Activated CD4-positive, alpha-beta memory T cell treated with anti-CD3 and anti-CD28 coated beads for 36 hours (primary cell): ENCODE measurements at regions of chr3 and their contacts with region 1.

Region 1: GRCh38 chr3:46368569-46368968 is 2.2 kb upstream of the CCR5 start:
- DNase-seq: peak; percentile 80
- H3K4me3 Mint-ChIP-seq: no peak overlapping the region
- H3K27ac Mint-ChIP-seq: no peak overlapping the region
- H3K4me1 Mint-ChIP-seq: peaks cover 58% of the 10 kb centered on the region
- H3K27me3 Mint-ChIP-seq: peaks cover 24% of the 10 kb centered on the region

Region 2: DNA sequence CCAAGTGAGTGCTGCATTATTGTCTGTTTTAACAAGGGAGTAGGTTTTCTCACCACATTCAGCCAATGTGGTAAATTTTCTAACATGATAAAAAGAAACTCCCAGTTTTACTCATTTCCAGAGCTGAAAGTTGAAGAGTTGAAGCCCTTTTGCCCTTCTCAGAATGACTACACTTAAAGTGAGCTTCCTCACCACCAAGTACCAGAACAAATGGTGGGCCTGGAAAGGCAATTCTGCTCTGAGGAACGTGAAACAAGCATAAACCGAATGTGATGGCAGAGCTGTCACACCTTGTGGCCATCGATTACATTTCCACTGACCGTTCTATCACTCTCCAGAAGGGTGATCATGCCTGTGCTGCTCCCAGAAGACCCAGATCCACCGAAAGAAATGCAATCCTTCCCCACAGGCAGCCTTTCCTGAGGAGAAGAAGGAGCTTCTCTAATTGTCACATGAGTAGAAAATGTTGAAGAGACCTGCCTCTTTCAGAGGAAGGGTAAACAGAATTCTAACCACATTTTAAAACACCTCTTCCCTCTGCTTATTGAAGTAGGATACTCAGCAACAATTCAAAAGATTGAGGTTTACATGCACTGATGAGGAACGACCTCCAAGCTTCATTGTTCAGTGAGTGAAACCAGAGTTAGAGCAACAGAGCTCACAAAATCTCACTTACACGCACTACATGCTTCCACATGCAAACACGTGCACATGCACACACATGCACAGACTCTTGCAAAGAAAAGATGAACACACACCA is 503.6 kb before region 1 on chr3:
- CTCF ChIA-PET with region 1: interaction called, 5 read pairs
- POLR2A ChIA-PET with region 1: no interaction called
- intact Hi-C with region 1: loop called (anchors 5 kb)
- DNase-seq: peak; percentile 50
- H3K4me3 Mint-ChIP-seq: no peak overlapping the region
- H3K27ac Mint-ChIP-seq: no peak overlapping the region
- H3K4me1 Mint-ChIP-seq: peaks cover 51% of the 10 kb centered on the region
- H3K27me3 Mint-ChIP-seq: peaks cover 60% of the 10 kb centered on the region

Region 3: GRCh38 chr3:46078712-46079400 is 289.7 kb before region 1 on chr3:
- CTCF ChIA-PET with region 1: interaction called, 82 read pairs
- POLR2A ChIA-PET with region 1: no interaction called
- intact Hi-C with region 1: no loop called
- DNase-seq: peak; percentile 90
- H3K4me3 Mint-ChIP-seq: no peak overlapping the region
- H3K27ac Mint-ChIP-seq: peak overlapping the region; percentile 2
- H3K4me1 Mint-ChIP-seq: peaks cover 13% of the 10 kb centered on the region
- H3K27me3 Mint-ChIP-seq: peaks cover 15% of the 10 kb centered on the region

Region 4: DNA sequence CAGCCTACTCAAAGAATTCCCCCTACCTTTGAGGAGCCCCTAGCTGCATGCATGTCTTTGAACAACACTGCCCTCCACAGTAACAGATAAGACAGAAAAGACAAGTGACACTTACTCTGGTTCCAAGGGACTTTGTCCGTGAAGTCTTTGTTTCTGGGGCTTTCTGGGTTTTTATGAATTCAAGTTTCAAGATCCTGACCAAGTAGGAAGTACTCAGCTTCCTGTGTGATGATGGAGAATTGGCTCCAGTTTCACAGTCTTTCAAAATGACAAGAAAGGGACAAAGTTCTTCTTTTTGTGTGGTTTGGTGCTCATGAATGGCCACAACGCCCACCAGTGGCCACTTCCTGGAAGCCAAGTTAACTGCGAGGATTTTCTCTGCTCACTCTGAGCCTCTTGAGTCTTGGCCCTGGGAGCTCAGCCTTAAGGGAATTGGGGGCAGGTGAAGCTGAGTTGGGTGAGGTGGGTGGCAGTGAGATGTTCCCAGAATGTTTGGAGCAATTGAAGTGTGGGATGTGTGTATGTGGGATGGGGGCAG is 160.3 kb before region 1 on chr3 and contains the start of gene CCR1:
- CTCF ChIA-PET with region 1: interaction called, 19 read pairs
- POLR2A ChIA-PET with region 1: interaction called, 14 read pairs
- intact Hi-C with region 1: loop called (anchors 1 kb)
- DNase-seq: peak; percentile 81
- H3K4me3 Mint-ChIP-seq: no peak within 1 kb of the TSS
- H3K27ac Mint-ChIP-seq: peak within 1 kb of the TSS; percentile 64
- H3K4me1 Mint-ChIP-seq: peaks cover 17% of the 10 kb centered on the region
- H3K27me3 Mint-ChIP-seq: peaks cover 1% of the 10 kb centered on the region
- total RNA-seq, gene CCR1: 0.80 to 1.3 TPM

Region 5: GRCh38 chr3:46276502-46277099 is 92.0 kb before region 1 on chr3:
- CTCF ChIA-PET with region 1: interaction called, 131 read pairs
- POLR2A ChIA-PET with region 1: interaction called, 18 read pairs
- intact Hi-C with region 1: loop called (anchors 1 kb)
- DNase-seq: peak; percentile 87
- H3K4me3 Mint-ChIP-seq: no peak overlapping the region
- H3K27ac Mint-ChIP-seq: no peak overlapping the region
- H3K4me1 Mint-ChIP-seq: peaks cover 43% of the 10 kb centered on the region
- H3K27me3 Mint-ChIP-seq: peaks cover 28% of the 10 kb centered on the region

Region 6: GRCh38 chr3:46314517-46314916 is 54.1 kb before region 1 on chr3:
- CTCF ChIA-PET with region 1: interaction called, 15 read pairs
- POLR2A ChIA-PET with region 1: no interaction called
- intact Hi-C with region 1: no loop called
- DNase-seq: no peak
- H3K4me3 Mint-ChIP-seq: no peak overlapping the region
- H3K27ac Mint-ChIP-seq: no peak overlapping the region
- H3K4me1 Mint-ChIP-seq: no peaks in the 10 kb centered on the region
- H3K27me3 Mint-ChIP-seq: peaks cover 12% of the 10 kb centered on the region